PC-9 (cell line): ENCODE measurements at regions of chr6 and their contacts with region 1.

Region 1: GRCh38 chr6:27237089-27237803 is 10.3 kb upstream of the PRSS16 start:
- DNase-seq: peak; percentile 54 to 56
- H3K4me3 ChIP-seq: peak overlapping the region; percentile 39
- H3K27ac ChIP-seq: no peak overlapping the region
- H3K4me1 ChIP-seq: peaks cover 13% of the 10 kb centered on the region; the same call in 1 of the 2 replicates
- H3K27me3 ChIP-seq: no peaks in the 10 kb centered on the region; the same call in 1 of the 2 replicates
- CTCF ChIP-seq: no peak

Region 2: GRCh38 chr6:27251606-27252251 is 14.5 kb after region 1 on chr6:
- CTCF ChIA-PET with region 1: interaction called, 3 read pairs
- POLR2A ChIA-PET with region 1: no interaction called
- intact Hi-C with region 1: loop called (anchors 2 kb)
- DNase-seq: peak; percentile 86 to 93
- H3K4me3 ChIP-seq: peak overlapping the region; percentile 84
- H3K27ac ChIP-seq: peak overlapping the region; percentile 65
- H3K4me1 ChIP-seq: peaks cover 11% of the 10 kb centered on the region
- H3K27me3 ChIP-seq: no peaks in the 10 kb centered on the region
- CTCF ChIP-seq: peak; percentile 69; the same call in 1 of the 2 replicates

Region 3: GRCh38 chr6:27295301-27296081 is 58.2 kb after region 1 on chr6:
- CTCF ChIA-PET with region 1: interaction called, 3 read pairs
- POLR2A ChIA-PET with region 1: no interaction called
- intact Hi-C with region 1: loop called (anchors 2 kb)
- DNase-seq: peak; percentile 49 to 73
- H3K4me3 ChIP-seq: peak overlapping the region; percentile 84
- H3K27ac ChIP-seq: no peak overlapping the region
- H3K4me1 ChIP-seq: peaks cover 27% of the 10 kb centered on the region
- H3K27me3 ChIP-seq: no peaks in the 10 kb centered on the region
- CTCF ChIP-seq: no peak

Region 4: DNA sequence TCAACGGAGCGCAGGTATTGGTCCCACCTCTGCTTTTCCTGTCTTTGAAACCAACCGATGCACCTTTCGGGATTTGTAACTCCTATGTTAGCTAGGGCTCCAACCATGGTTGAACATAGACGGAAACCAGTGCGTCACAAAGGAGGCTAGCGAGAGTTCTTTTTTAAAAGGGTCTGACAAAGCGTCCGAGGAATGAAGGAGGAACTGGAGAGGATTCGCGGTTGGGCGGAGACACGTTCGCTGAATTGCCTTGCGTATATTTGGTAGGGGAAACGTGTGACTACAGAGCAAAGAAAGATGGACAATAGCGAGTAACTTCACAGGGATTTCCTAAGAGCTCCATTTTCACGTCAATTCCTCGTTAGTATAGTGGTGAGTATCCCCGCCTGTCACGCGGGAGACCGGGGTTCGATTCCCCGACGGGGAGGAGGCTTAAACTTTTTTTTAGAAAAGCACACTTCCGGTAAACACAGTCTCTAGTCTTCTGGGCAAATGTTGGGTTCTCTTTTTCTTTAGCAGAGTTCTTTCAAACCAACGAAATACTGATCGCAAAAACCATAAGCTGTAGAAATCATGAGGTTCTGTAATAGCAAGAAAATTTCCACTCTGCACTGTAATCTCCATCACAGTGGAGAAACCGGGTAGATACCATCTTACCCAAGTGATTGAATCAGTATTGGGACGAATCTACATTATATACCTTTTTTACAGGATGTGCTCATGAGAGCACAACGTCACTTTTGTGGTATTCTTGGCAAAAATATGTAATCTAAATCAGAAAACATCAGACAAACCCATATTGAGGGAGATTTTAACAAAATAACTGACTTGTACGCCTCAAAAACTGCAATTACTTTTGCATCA is 242.3 kb after region 1 on chr6:
- CTCF ChIA-PET with region 1: no interaction called
- POLR2A ChIA-PET with region 1: no interaction called
- intact Hi-C with region 1: loop called (anchors 5 kb)
- DNase-seq: peak; percentile 84
- H3K4me3 ChIP-seq: peak overlapping the region; percentile 66
- H3K27ac ChIP-seq: peak overlapping the region; percentile 82
- H3K4me1 ChIP-seq: peaks cover 9% of the 10 kb centered on the region; the same call in 1 of the 2 replicates
- H3K27me3 ChIP-seq: no peaks in the 10 kb centered on the region
- CTCF ChIP-seq: no peak